ENCODE measurements at regions of chr21 and their contacts with region 1.

Region 1: GRCh38 chr21:31446226-31446855 is 102.3 kb upstream of the TIAM1 start:
- DNase-seq: no peak
- H3K4me3 ChIP-seq: no peak overlapping the region
- H3K27ac ChIP-seq: no peak overlapping the region
- H3K4me1 ChIP-seq: no peaks in the 10 kb centered on the region
- H3K27me3 ChIP-seq: no peaks in the 10 kb centered on the region
- CTCF ChIP-seq: no peak

Region 2: DNA sequence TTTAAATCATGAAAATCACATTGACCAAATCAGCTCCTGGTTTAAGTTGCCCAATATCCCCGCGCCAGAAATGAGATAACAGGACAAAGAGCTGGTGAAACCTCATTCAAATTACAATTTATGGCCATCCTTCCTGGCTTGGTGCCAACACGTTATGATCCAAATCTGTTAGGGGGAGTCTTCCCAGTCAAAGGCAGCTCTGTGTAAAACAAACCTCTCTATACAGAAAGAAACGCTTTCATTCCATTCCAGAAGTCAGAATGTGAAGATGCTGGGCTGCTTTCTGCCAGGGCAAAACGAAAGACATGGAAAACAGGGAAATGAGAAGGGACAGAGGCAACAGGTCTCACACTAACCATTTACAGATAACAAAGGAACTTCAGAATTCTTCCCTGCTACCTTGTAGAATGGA is 48.8 kb before region 1 on chr21:
- CTCF ChIA-PET with region 1: no interaction called
- dilution Hi-C with region 1: loop called (anchors 5 kb)
- in situ Hi-C with region 1: no loop called
- intact Hi-C with region 1: no loop called
- DNase-seq: peak; percentile 12
- H3K4me3 ChIP-seq: no peak overlapping the region
- H3K27ac ChIP-seq: no peak overlapping the region
- H3K4me1 ChIP-seq: no peaks in the 10 kb centered on the region
- H3K27me3 ChIP-seq: no peaks in the 10 kb centered on the region
- CTCF ChIP-seq: no peak

Measured in mammary epithelial cell (primary cell).